Activated T-helper 2 cell treated with anti-CD3 and anti-CD28 coated beads, Interferon-gamma antibody, Interleukin-2, Interleukin-4, amounts not matched to agents 10 μg/mL and 5 μg/mL and 100 μg/mL, durations not matched to agents 14 hours and 24 hours and 36 hours (primary cell): ENCODE measurements at regions of chr10 and their contacts with region 1.

Region 1: DNA sequence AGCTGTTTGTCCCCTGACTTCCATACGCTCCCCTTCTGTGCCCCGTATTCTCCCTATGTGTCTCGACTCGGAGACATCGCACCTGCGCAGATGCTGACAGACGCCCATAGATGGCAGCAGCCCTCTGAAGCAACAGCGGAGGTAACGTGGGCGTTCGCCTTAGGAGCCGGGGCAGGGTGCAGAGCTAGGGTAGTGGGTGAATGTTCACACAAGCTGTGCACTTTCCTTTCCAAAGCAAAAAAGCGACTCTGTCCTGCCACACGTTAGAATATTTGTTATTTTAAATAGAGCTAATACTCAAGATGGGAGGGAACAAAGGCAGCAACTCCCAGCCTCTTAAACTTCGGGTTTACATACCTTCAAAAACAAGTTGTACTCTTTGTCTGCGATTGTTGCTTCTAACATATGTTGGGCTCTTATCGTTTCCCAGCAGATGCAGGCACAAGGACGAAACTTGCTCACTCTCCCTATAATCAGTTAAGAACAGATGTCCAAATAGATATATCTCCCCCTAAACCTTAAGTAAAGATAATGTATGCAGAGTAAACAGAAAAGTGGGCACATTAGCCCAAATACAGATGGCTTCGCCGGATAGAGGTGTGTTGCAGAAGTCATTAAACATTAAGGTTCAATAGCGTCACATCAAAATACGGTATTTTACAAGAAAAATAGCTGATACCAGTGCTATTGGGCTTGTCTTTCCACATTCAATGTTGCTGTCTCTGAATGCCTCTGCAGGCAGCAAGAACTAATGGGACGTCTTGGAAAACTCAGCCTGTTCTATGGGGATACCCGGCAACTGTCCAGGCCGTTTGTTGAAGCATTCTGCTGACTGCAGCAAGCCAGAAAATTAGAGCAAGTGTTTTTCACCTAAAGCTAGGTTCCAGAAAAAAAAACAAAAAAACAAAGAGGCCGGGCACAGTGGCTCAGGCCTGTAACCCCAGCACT is 340.3 kb upstream of the PRKCQ start:
- DNase-seq: peak; percentile 69
- H3K4me3 Mint-ChIP-seq: no peak overlapping the region
- H3K27ac Mint-ChIP-seq: no peak overlapping the region
- H3K4me1 Mint-ChIP-seq: peaks cover 20% of the 10 kb centered on the region
- H3K27me3 Mint-ChIP-seq: peaks cover 16% of the 10 kb centered on the region

Region 2: GRCh38 chr10:6995831-6996230 is 75.5 kb after region 1 on chr10:
- intact Hi-C with region 1: no loop called
- DNase-seq: no peak
- H3K4me3 Mint-ChIP-seq: no peak overlapping the region
- H3K27ac Mint-ChIP-seq: no peak overlapping the region
- H3K4me1 Mint-ChIP-seq: peaks cover 2% of the 10 kb centered on the region
- H3K27me3 Mint-ChIP-seq: peaks cover 39% of the 10 kb centered on the region

Region 3: DNA sequence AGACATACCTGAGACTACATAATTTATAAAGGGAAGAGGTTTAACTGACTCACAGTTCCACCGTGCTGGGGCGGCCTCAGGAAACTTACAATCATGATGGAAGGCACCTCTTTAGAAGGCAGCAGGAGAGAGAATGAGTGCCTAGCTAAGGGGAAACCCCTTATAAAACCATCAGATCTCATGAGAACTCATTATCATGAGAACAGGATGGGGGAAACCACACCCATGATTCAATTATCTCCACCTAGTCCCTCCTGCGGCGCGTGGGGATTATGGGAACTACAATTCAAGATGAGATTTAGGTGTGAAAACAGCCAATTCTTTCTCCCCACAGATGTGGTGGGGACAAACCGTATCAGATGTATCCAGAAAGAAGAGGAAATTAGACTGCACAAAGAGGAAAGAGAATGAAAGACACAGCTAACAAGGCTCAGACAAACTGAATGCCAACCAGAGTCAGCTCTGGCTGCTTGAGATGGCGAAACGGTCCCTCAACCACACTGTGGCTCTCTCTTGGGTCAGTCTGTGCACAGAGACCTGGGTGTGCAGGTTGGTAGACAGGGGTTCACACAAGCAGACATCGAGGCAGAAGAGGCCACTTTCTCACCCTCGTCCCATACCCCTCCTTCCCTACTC is 114.9 kb after region 1 on chr10:
- intact Hi-C with region 1: loop called (anchors 10 kb)
- DNase-seq: no peak
- H3K4me3 Mint-ChIP-seq: no peak overlapping the region
- H3K27ac Mint-ChIP-seq: no peak overlapping the region
- H3K4me1 Mint-ChIP-seq: peaks cover 22% of the 10 kb centered on the region
- H3K27me3 Mint-ChIP-seq: peaks cover 13% of the 10 kb centered on the region

Region 4: GRCh38 chr10:7111561-7111960 is 191.2 kb after region 1 on chr10:
- intact Hi-C with region 1: loop called (anchors 10 kb)
- DNase-seq: no peak
- H3K4me3 Mint-ChIP-seq: no peak overlapping the region
- H3K27ac Mint-ChIP-seq: no peak overlapping the region
- H3K4me1 Mint-ChIP-seq: peaks cover 9% of the 10 kb centered on the region
- H3K27me3 Mint-ChIP-seq: peaks cover 27% of the 10 kb centered on the region

Region 5: GRCh38 chr10:7205656-7206055 is 285.3 kb after region 1 on chr10:
- intact Hi-C with region 1: no loop called
- DNase-seq: no peak
- H3K4me3 Mint-ChIP-seq: no peak overlapping the region
- H3K27ac Mint-ChIP-seq: no peak overlapping the region
- H3K4me1 Mint-ChIP-seq: peaks cover 4% of the 10 kb centered on the region
- H3K27me3 Mint-ChIP-seq: no peaks in the 10 kb centered on the region

Region 6: GRCh38 chr10:7239312-7239985 is 319.1 kb after region 1 on chr10:
- intact Hi-C with region 1: no loop called
- DNase-seq: no peak
- H3K4me3 Mint-ChIP-seq: no peak overlapping the region
- H3K27ac Mint-ChIP-seq: peak overlapping the region; percentile 13
- H3K4me1 Mint-ChIP-seq: peaks cover 40% of the 10 kb centered on the region
- H3K27me3 Mint-ChIP-seq: no peaks in the 10 kb centered on the region

Region 7: DNA sequence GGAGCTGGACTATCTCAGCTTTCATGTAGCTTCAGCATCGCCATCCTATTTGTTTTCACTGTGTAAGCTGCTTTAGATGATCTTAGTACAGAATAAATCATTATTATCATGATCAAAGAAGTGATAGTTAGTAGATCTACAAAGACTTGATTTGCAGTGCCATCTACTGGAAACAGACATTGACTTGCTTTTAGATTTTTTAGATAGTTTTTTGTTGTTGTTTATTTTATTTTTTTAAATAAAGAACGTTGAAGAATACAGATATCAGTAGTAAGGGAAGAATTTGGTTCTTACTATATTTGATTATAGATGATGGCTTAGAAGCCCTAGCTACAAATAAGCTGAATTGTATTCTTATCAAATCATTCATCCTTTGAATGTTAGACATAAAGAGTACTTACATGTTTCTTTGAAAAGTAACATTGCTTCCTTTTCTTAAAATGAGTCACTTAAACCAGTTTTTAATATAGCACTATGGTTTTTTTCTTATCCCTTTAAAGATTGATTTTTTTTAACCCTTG is 496.8 kb after region 1 on chr10:
- intact Hi-C with region 1: loop called (anchors 1 kb)
- DNase-seq: no peak
- H3K4me3 Mint-ChIP-seq: no peak overlapping the region
- H3K27ac Mint-ChIP-seq: peak overlapping the region; percentile 33
- H3K4me1 Mint-ChIP-seq: peaks cover 24% of the 10 kb centered on the region
- H3K27me3 Mint-ChIP-seq: peaks cover 46% of the 10 kb centered on the region